ENCODE measurements at regions of chr16 and their contacts with region 1.

Region 1: GRCh38 chr16:57648590-57649442 is 19.3 kb upstream of the ADGRG3 start:
- DNase-seq: peak; percentile 90 to 93
- ATAC-seq: peak; percentile 60 to 87 (median 66)
- H3K4me3 ChIP-seq: peak overlapping the region; percentile 54
- H3K4me3 Mint-ChIP-seq: peak overlapping the region; percentile 93
- H3K27ac ChIP-seq: peak overlapping the region; percentile 84
- H3K27ac Mint-ChIP-seq: peak overlapping the region; percentile 91 to 96
- H3K4me1 ChIP-seq: peaks cover 98% of the 10 kb centered on the region
- H3K4me1 Mint-ChIP-seq: peaks cover 65 to 66% of the 10 kb centered on the region in 2 donors
- H3K27me3 ChIP-seq: no peaks in the 10 kb centered on the region
- H3K27me3 Mint-ChIP-seq: no peaks in the 10 kb centered on the region
- CTCF ChIP-seq: peak; percentile 100

Region 2: DNA sequence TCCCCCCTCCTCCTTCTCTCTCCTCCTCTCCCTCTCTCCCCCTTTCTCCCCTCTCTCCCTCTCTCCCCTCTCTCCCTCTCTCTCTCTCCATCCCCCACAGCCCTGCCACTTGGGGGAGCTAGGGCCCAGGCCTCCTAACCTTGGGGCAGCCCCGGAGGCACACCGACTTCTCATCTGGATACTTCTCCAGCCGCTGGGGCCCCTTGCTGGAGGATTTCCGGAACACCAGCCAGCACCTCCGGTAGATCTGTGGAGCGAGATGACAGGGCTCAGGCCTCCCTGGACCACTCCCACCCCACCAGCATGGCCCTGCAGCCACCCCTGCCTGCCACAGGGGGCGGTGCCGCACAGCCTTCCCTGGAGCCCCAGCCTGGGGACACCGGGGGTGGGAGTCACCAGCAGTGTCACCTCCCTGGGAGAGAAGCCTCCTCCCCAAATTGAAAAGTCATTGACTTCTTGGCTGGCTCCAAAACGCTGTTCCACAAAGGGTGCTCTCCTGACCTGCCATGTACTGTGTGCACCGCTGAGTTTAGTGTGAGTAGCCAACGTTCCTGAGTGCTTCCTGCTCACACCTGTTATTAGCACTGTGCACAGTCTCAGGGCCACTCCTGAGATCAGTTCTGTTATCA is 173.0 kb before region 1 on chr16:
- intact Hi-C with region 1: no loop called
- DNase-seq: peak; percentile 71 to 84
- ATAC-seq: peak; percentile 92 to 98 (median 93)
- H3K4me3 ChIP-seq: no peak overlapping the region
- H3K4me3 Mint-ChIP-seq: no peak overlapping the region
- H3K27ac ChIP-seq: no peak overlapping the region
- H3K27ac Mint-ChIP-seq: peak overlapping the region in 1 of 2 donors; percentile 14
- H3K4me1 ChIP-seq: peaks cover 34% of the 10 kb centered on the region
- H3K4me1 Mint-ChIP-seq: peaks cover 19 to 35% of the 10 kb centered on the region in 2 donors
- H3K27me3 ChIP-seq: no peaks in the 10 kb centered on the region
- H3K27me3 Mint-ChIP-seq: no peaks in the 10 kb centered on the region
- CTCF ChIP-seq: peak; percentile 75

Region 3: GRCh38 chr16:57530104-57530521 is 118.7 kb before region 1 on chr16:
- intact Hi-C with region 1: loop called (anchors 5 kb)
- DNase-seq: peak; percentile 75 to 86
- ATAC-seq: peak; percentile 92 to 95 (median 94)
- H3K4me3 ChIP-seq: no peak overlapping the region
- H3K4me3 Mint-ChIP-seq: peak overlapping the region; percentile 92
- H3K27ac ChIP-seq: peak overlapping the region; percentile 92
- H3K27ac Mint-ChIP-seq: peak overlapping the region; percentile 99
- H3K4me1 ChIP-seq: peaks cover 77% of the 10 kb centered on the region
- H3K4me1 Mint-ChIP-seq: peaks cover 59 to 60% of the 10 kb centered on the region in 2 donors
- H3K27me3 ChIP-seq: no peaks in the 10 kb centered on the region
- H3K27me3 Mint-ChIP-seq: no peaks in the 10 kb centered on the region
- CTCF ChIP-seq: no peak

Region 4: DNA sequence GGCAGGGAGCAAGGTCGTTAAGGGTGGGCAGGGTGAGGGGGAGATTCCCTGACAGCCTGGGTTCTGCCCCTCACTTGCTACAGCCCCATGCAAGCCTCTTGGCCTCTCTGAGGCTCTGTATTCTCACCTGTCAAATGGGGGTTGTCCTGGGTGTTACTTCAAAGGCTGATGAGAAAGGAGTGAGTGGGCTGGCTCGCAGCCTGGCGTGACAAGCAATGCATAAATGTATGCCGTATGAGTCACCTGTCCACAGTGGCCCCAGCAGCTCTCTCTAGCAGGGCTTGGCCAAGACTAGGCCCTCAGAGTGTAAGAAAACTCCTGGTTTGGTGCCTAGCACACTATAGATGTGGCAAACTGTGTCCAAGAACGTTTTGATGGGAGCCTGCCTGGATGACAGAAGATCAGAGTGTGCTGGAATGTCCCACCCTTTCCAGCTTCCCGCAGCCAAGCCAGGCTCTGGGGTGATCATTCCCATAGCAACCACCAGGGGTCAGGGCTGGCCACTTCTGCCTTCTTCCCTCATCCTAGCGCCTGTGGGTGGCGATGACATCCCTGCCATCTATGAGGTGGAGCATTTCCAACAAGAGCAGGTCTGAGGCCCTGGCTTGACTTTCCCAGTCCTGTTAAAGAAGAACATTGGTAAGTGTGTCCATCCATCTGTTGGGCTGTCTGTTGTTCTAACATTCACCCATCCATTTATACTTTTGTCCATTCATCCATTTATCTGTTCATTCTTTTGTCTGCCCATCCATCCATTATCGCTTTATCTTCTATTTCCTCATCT is 57.5 kb before region 1 on chr16:
- intact Hi-C with region 1: loop called (anchors 1 kb)
- DNase-seq: peak; percentile 69 to 83
- ATAC-seq: peak; percentile 61 to 79 (median 63)
- H3K4me3 ChIP-seq: peak overlapping the region; percentile 19
- H3K4me3 Mint-ChIP-seq: peak overlapping the region; percentile 82
- H3K27ac ChIP-seq: peak overlapping the region; percentile 89
- H3K27ac Mint-ChIP-seq: peak overlapping the region; percentile 94 to 97
- H3K4me1 ChIP-seq: peaks cover 81% of the 10 kb centered on the region
- H3K4me1 Mint-ChIP-seq: peaks cover 80 to 87% of the 10 kb centered on the region in 2 donors
- H3K27me3 ChIP-seq: no peaks in the 10 kb centered on the region
- H3K27me3 Mint-ChIP-seq: no peaks in the 10 kb centered on the region
- CTCF ChIP-seq: peak; percentile 81

Region 5: DNA sequence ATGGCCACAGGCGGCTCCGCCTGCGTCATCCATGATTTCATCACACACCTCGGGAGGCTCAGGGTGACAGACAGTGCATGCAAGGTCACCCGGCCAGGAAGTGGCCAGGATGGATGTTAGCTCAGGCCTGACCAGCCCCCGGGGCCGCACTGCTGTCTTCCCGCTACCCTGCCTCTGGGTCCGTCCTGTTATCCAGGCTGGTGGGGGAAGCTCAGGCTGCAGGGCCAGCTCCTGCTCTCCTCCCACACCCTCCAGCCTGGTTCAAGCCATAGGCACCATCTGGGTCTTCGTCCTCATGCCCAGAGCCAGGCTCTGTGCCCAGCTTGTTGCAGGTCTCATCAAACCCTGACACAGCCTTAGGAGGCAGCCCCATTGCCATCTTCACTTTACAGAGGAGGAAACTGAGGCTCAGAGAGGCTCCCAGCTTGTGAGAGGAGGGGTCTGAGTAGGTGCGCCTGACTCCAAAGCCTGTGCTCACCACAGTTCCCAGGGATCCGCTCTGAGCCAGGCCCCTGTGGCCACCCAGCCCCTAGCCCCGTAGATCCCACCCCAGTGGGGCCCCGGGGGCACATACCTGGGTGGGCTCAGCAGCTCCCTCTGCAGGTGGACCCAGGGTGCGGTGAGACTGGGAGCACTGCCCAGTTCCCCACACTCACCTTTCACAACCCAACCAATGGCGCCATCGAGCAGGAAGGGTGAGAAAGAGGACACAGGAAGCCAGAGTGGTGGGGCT is 18.9 kb after region 1 on chr16:
- intact Hi-C with region 1: loop called (anchors 2 kb)
- DNase-seq: peak; percentile 52 to 77
- ATAC-seq: peak; percentile 76 to 92 (median 82)
- H3K4me3 ChIP-seq: no peak overlapping the region
- H3K4me3 Mint-ChIP-seq: peak overlapping the region; percentile 53
- H3K27ac ChIP-seq: peak overlapping the region; percentile 90
- H3K27ac Mint-ChIP-seq: peak overlapping the region; percentile 97 to 98
- H3K4me1 ChIP-seq: peaks cover 53% of the 10 kb centered on the region
- H3K4me1 Mint-ChIP-seq: peaks cover 38 to 54% of the 10 kb centered on the region in 2 donors
- H3K27me3 ChIP-seq: no peaks in the 10 kb centered on the region
- H3K27me3 Mint-ChIP-seq: no peaks in the 10 kb centered on the region
- CTCF ChIP-seq: no peak

Region 6: GRCh38 chr16:57810197-57811031 is 161.6 kb after region 1 on chr16:
- intact Hi-C with region 1: loop called (anchors 2 kb)
- DNase-seq: peak; percentile 82 to 89
- ATAC-seq: peak; percentile 93 to 99 (median 98)
- H3K4me3 ChIP-seq: no peak overlapping the region
- H3K4me3 Mint-ChIP-seq: peak overlapping the region; percentile 69
- H3K27ac ChIP-seq: peak overlapping the region; percentile 52
- H3K27ac Mint-ChIP-seq: peak overlapping the region; percentile 95 to 96
- H3K4me1 ChIP-seq: peaks cover 46% of the 10 kb centered on the region
- H3K4me1 Mint-ChIP-seq: peaks cover 49 to 50% of the 10 kb centered on the region in 2 donors
- H3K27me3 ChIP-seq: no peaks in the 10 kb centered on the region
- H3K27me3 Mint-ChIP-seq: no peaks in the 10 kb centered on the region
- CTCF ChIP-seq: no peak

Region 7: GRCh38 chr16:58384113-58385055 is 735.6 kb after region 1 on chr16:
- intact Hi-C with region 1: no loop called
- DNase-seq: no peak
- ATAC-seq: no peak
- H3K4me3 ChIP-seq: no peak overlapping the region
- H3K4me3 Mint-ChIP-seq: no peak overlapping the region
- H3K27ac ChIP-seq: no peak overlapping the region
- H3K27ac Mint-ChIP-seq: no peak overlapping the region
- H3K4me1 ChIP-seq: no peaks in the 10 kb centered on the region
- H3K4me1 Mint-ChIP-seq: no peaks in the 10 kb centered on the region
- H3K27me3 ChIP-seq: no peaks in the 10 kb centered on the region
- H3K27me3 Mint-ChIP-seq: peaks cover 10 to 15% of the 10 kb centered on the region in 2 donors
- CTCF ChIP-seq: no peak

Measured in natural killer cell (primary cell).